ENCODE measurements at regions of chr4 and their contacts with region 1.

Region 1: DNA sequence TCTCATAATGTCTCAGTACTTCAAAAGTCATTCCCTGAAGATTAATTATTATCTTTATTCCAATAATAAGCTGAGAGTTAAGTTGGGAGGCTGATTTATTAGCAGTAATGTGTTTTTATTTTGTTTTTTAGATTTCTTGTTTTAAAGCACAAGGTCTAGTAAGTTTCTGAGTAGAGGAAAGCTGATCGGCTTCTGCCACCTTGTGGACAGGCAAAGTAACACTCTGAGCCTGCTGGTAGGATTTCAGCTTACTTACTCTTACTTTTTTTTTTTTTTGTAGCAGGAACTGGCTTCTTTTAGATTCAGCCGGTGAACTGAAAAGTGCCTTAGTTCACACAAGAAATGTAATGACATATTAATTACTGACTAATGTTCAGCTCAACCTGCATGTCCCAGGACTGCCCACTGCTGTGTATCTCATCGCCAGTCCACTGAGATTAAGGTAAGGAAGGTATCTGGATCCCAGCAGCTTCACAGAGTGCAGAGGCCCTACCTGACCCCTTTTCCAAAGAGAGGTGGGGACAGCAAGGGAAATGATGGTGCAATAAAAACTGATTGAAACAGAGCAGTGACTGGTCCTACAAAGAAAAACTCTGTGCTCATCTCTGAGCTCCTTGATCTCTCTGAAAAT is 126.5 kb downstream of the ADGRA3 start:
- DNase-seq: peak; percentile 11
- CTCF ChIP-seq: peak; percentile 50

Region 2: DNA sequence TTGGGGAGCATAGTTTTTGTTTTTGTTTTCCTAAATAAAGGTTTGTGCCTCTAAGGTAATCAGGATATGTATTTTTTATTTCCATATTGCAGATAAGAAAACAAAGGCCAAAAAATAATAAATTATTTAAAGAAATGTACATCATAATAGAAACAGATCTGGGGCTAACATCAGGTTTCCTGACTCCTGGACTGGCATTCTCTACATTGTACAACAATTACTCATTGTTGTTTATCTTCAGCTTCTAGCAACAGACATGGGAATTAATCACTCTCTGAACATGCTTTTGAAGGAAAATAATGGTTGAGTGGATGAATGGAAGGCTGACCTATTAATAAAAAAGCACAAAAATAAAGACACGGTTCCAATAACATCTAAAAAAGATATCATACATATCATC is 586.9 kb before region 1 on chr4:
- in situ Hi-C with region 1: loop called (anchors 5 kb)
- DNase-seq: no peak
- CTCF ChIP-seq: no peak

Region 3: GRCh38 chr4:21952549-21952948 is 436.8 kb before region 1 on chr4:
- in situ Hi-C with region 1: no loop called
- DNase-seq: no peak
- CTCF ChIP-seq: no peak

Region 4: GRCh38 chr4:22444813-22445212 is 55.5 kb after region 1 on chr4:
- in situ Hi-C with region 1: no loop called
- DNase-seq: no peak
- CTCF ChIP-seq: no peak

Region 5: DNA sequence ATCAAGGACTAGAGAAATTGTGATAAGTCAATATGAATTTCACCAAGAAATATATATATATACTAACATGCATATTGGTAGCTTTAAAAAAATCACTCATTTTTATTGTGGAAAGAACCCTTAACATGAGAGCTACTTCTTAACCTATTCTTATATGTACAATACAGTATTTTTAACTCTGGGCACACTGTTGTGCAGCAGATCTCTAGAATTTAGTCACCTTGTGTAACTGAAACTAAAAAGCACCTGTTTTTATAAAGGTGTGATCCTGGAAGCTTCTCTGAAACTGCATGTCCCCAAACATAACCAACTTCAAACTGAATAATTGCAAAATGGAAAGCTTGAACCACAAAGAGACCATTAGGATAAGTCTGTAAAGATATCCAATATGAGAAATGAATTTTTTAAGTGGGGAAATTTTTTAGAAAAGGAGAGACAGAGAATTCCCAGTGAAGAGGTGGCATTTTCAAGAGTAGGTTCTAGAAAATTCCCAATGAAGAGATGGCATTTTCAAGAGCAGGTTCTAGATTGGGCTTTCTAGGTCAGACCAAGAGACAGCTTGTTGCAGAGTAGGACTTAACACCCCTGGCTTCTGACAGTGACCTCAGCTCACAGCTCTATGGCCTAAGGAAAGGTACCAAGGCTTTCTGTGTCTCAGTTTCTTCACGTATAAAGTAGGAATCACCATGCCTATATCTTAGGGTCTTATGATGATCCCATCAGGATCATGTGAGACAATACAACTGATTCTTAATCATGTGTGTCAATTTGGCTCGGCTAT is 1522.5 kb after region 1 on chr4:
- in situ Hi-C with region 1: no loop called
- DNase-seq: peak; percentile 8
- CTCF ChIP-seq: no peak